ENCODE measurements at regions of chr14 and their contacts with region 1.

Region 1: DNA sequence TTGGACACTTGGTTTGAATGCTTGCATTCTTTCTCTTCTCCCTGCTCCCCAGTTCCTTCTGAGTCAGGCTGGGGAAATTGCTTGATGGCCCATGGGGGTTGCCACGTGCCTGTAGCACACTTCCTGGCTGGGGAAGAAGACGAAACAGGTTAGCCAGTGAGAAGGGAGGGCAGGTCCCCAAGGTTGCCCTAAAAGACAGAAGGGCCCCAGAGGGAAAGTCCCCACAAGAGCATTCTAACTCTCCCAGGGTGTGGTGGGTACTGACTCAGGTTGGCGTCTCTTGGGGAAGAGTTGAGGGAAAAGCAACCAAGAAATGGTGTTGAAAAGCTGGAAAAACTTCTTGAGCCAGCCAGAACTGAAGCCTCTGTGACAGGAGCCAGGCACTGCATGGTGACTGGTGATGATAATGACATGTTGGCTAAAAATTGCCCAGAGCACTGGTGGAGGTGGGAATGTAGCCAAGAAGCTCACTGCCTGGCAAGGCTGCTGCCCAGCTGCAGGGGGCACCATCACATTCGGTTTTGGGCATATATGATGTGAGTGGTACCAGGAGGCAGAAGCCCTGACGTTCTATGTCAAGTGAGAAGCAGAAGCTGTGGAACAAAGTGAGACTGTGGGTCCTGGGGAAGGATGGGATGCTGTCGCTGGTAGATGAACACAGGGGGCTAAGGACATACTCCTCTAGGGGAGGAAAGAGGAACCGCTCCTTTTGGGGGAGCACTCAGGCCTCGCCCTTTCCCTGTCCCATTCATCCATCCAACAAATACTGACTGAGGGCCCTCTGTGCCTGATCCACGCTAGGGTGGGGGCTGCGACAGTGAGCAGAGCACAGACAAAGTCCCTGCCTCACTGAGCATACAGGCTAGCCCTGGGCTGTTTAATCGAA is 8.1 kb upstream of the RABGGTA start:
- DNase-seq: peak; percentile 77
- H3K4me3 Mint-ChIP-seq: no peak overlapping the region
- H3K27ac Mint-ChIP-seq: peak overlapping the region; percentile 70
- H3K4me1 Mint-ChIP-seq: peaks cover 46% of the 10 kb centered on the region
- H3K27me3 Mint-ChIP-seq: no peaks in the 10 kb centered on the region

Region 2: GRCh38 chr14:24289649-24290249 is 10.2 kb after region 1 on chr14:
- CTCF ChIA-PET with region 1: interaction called, 25 read pairs
- POLR2A ChIA-PET with region 1: interaction called, 15 read pairs
- intact Hi-C with region 1: loop called (anchors 1 kb)
- DNase-seq: peak; percentile 90
- H3K4me3 Mint-ChIP-seq: no peak overlapping the region
- H3K27ac Mint-ChIP-seq: peak overlapping the region; percentile 8
- H3K4me1 Mint-ChIP-seq: peaks cover 25% of the 10 kb centered on the region
- H3K27me3 Mint-ChIP-seq: peaks cover 2% of the 10 kb centered on the region

Measured in activated CD4-positive, alpha-beta memory T cell treated with anti-CD3 and anti-CD28 coated beads for 36 hours (primary cell).